ENCODE measurements at regions of chr1 and their contacts with region 1.

Region 1: GRCh38 chr1:46477153-46477929 is 12.3 kb upstream of the DMBX1 start:
- DNase-seq: peak; percentile 87
- CTCF ChIP-seq: peak; percentile 91

Region 2: GRCh38 chr1:46494910-46495309 is 17.6 kb after region 1 on chr1:
- CTCF ChIA-PET with region 1: interaction called, 10 read pairs
- POLR2A ChIA-PET with region 1: no interaction called
- DNase-seq: no peak
- CTCF ChIP-seq: no peak

Region 3: DNA sequence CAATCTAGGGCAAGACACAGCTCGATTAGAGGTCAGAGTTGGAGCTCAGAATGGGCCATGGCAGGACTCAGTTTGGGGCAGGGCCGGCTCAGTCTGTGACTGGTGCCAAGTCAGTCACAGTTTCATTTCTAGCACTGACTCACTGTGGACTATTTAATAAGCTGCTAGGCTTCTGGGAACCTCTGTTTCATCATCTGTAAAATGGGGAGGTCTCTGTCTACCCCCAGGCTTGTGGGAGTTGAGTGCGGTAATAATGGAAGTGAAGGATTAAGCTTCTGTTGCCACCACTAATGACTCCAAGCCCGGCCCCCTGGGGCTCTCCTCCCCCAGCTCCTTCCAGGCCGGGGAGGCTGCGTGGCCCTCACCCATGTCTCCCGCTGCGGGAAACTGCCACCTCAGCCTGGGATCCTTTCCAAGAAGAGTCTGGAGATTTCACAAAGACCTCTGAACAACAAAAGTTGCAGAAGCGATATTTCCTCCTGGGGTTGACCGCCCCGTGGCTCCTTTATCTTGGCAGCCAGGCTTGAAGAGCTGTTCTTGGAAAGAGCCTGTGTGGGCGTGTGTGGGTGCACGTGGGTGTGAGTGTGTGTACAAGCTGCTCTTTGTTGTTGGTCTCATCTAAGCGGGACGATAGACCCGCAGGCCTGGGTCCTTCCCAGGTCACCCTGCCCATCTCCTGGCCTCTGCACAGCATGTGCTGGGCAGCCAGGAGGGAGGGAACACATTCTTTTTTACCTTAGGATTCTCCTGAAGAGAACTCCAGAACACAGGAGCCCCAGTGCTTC is 45.0 kb after region 1 on chr1:
- CTCF ChIA-PET with region 1: interaction called, 169 read pairs
- POLR2A ChIA-PET with region 1: no interaction called
- DNase-seq: no peak
- CTCF ChIP-seq: no peak

Region 4: DNA sequence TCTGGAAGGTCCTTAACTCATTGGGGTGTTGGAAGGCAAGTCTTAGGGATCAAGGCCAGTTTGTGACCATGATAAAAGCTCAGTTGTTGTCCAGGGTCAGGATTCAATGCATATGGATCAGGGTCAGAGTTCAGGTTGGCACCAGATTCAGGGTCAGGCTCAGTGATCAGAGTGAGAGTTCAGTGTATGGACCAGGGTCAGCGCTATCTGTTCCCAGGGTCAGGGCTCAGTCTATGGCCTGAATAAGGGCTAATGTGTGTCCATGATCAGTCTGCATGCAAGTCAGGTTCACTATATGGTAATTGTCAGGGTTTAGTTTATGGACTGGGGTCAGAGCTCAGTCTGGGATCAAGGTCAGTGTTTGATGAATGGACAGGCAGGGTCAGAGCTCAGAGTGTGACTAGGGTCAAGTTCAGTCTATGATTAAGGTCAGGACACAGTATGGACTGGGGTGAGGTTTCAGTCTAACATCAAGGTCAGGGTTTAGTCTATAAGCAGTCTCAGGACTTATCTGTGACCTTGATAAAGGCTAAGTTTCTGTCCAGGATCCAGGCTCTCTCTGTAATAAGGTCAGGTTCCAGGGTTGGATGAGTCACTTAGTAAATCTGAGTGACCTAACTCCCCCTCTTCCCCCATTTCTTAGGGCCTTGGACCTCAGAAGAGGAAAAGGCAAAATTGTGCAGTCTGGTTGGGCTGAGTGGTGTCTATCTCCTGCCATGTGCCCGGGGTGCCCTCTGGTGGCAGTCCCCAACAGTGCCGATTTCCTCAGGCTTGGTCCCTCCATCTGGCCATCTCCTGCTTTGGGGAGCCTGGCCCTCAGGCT is 50.3 kb after region 1 on chr1:
- CTCF ChIA-PET with region 1: interaction called, 169 read pairs
- POLR2A ChIA-PET with region 1: no interaction called
- DNase-seq: peak; percentile 87
- CTCF ChIP-seq: peak; percentile 97

Measured in GM10248 (cell line).